CD4-positive, alpha-beta T cell (primary cell): ENCODE measurements at regions of chr1 and their contacts with region 1.

Region 1: DNA sequence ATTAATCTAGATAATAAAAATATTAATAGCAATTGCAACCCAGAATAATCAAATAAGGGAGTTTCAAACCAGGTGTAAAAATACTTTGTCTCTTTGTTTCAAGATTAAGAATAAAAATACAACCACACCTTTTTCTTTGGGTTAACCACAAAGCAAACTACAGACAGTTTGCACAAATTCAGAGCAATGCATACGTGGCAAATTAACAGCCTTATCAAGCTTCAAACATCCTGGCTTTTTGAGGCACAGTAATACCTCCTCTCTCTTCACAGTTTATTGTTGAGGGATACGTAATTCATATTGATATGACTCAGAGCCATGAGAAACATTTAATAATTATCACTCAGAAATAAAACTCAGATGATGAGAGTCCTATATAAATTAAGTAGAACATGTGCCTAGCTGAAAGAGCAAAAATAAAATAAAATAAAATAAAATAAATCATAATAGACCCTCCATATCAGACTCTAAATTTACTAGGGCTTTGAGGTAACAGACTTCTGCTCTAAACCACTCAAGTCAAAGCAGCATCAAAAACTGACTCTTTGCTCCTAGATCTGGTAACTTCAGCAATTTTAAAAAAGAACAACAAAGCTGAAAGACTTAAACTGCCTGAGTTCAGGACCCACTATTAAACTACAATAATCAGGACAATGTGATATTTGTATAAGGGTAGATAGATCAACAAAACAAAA is 11.4 kb downstream of the EDEM3 start:
- DNase-seq: peak in 5 of 14 experiments; percentile 29 to 87 (median 80)
- ATAC-seq: peak; percentile 92
- H3K4me3 ChIP-seq: no peak overlapping the region
- H3K4me3 Mint-ChIP-seq: peak overlapping the region; percentile 49
- H3K27ac ChIP-seq: peak overlapping the region; percentile 55 to 65
- H3K27ac Mint-ChIP-seq: peak overlapping the region; percentile 90
- H3K4me1 ChIP-seq: peaks cover 10% of the 10 kb centered on the region
- H3K4me1 Mint-ChIP-seq: peaks cover 79% of the 10 kb centered on the region
- H3K27me3 ChIP-seq: no peaks in the 10 kb centered on the region
- H3K27me3 Mint-ChIP-seq: no peaks in the 10 kb centered on the region
- CTCF ChIP-seq: no peak

Region 2: DNA sequence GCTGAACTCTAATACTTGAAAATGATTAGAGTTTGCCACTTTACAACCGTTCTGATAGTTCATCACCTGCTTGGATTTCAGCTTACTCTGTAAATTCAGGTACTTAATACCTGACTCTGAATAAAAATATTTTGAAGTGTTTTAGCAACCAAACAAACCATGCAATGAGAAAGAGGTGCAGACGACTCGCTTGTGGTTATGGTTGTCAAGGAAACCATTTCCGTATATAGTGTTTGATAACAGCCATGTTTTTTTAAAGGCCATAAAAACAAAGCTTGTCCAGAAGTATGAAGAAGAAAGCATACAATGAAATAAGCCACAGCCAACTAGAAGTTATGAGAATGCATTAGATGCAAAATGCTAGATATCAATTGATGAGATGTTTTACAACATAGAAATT is 823.8 kb after region 1 on chr1:
- CTCF ChIA-PET with region 1: no interaction called
- POLR2A ChIA-PET with region 1: no interaction called
- intact Hi-C with region 1: loop called in 1 of 2 experiments (anchors 5 kb)
- DNase-seq: peak in 12 of 14 experiments; percentile 15 to 95 (median 38)
- ATAC-seq: peak; percentile 81
- H3K4me3 ChIP-seq: no peak overlapping the region
- H3K4me3 Mint-ChIP-seq: peak overlapping the region; percentile 74
- H3K27ac ChIP-seq: peak overlapping the region; percentile 88 to 91
- H3K27ac Mint-ChIP-seq: peak overlapping the region; percentile 94
- H3K4me1 ChIP-seq: peaks cover 40% of the 10 kb centered on the region
- H3K4me1 Mint-ChIP-seq: peaks cover 92% of the 10 kb centered on the region
- H3K27me3 ChIP-seq: no peaks in the 10 kb centered on the region
- H3K27me3 Mint-ChIP-seq: no peaks in the 10 kb centered on the region
- CTCF ChIP-seq: no peak